ENCODE measurements at regions of chr15 and their contacts with region 1.

Region 1: DNA sequence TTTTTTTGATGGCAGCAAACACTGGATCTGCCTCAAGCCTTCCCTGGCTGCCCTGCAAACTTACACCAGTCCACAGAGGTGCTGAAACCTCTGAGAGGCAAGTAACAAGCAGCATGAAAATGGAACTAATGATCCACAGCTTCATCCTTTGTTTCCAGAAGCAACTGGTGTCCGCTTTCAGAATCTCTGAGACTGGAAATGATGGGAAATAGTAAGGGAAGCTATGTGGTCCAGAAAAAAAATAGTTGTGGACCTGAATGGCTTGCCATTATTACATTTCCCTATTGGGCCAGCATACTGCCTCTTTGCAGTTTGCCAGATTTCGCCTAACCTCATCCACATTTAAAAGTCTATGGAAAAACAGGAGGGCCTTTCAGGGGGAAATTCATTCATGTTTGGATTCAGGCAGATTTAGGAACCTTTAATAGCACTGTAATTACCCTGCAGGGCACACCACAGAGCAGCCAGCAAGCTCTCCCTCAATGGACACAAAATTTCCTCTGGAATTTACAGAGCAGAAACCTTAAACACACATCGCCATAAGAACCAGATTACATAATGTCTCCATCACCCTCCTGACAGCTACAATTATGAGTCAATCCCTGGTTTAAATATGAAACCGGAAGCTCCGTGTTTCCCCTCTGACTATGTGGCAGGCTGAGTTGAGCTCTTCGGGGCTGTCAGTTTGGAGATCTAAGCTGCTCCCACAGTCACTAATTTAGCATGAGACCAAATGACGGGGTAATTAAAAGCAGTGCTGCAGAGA is 134.4 kb downstream of the TMCO5A start:
- DNase-seq: peak; percentile 95
- H3K4me3 ChIP-seq: peak overlapping the region; percentile 12
- H3K27ac ChIP-seq: peak overlapping the region; percentile 57
- H3K4me1 ChIP-seq: peaks cover 24% of the 10 kb centered on the region
- H3K27me3 ChIP-seq: no peaks in the 10 kb centered on the region
- CTCF ChIP-seq: no peak

Region 2: DNA sequence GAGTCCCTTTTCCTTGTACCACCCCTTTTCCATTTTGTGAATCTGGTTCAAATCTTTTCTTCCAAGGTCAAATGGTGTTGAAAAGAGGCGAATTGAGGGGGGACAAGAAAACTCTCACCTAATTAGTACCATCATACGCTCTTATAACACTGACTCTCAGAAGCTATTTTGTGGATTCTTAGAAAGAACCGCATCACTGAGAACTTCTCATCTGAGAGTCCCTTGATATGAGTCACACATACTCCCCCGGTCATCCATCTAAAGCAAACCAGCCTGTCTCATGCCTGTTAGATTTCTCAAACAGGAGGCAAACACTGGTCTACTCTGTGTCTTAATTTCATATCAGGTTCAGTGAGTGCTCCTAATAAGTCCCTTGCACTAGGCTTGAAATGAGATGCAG is 107.3 kb after region 1 on chr15:
- CTCF ChIA-PET with region 1: no interaction called
- POLR2A ChIA-PET with region 1: no interaction called
- intact Hi-C with region 1: no loop called
- DNase-seq: peak; percentile 12
- H3K4me3 ChIP-seq: no peak overlapping the region
- H3K27ac ChIP-seq: no peak overlapping the region
- H3K4me1 ChIP-seq: peaks cover 2% of the 10 kb centered on the region
- H3K27me3 ChIP-seq: no peaks in the 10 kb centered on the region
- CTCF ChIP-seq: no peak

Region 3: GRCh38 chr15:38247336-38247735 is 178.5 kb after region 1 on chr15:
- CTCF ChIA-PET with region 1: interaction called, 3 read pairs
- POLR2A ChIA-PET with region 1: no interaction called
- intact Hi-C with region 1: loop called (anchors 1 kb)
- DNase-seq: peak; percentile 90
- H3K4me3 ChIP-seq: no peak overlapping the region
- H3K27ac ChIP-seq: no peak overlapping the region
- H3K4me1 ChIP-seq: peaks cover 32% of the 10 kb centered on the region
- H3K27me3 ChIP-seq: peaks cover 19% of the 10 kb centered on the region
- CTCF ChIP-seq: no peak

Region 4: DNA sequence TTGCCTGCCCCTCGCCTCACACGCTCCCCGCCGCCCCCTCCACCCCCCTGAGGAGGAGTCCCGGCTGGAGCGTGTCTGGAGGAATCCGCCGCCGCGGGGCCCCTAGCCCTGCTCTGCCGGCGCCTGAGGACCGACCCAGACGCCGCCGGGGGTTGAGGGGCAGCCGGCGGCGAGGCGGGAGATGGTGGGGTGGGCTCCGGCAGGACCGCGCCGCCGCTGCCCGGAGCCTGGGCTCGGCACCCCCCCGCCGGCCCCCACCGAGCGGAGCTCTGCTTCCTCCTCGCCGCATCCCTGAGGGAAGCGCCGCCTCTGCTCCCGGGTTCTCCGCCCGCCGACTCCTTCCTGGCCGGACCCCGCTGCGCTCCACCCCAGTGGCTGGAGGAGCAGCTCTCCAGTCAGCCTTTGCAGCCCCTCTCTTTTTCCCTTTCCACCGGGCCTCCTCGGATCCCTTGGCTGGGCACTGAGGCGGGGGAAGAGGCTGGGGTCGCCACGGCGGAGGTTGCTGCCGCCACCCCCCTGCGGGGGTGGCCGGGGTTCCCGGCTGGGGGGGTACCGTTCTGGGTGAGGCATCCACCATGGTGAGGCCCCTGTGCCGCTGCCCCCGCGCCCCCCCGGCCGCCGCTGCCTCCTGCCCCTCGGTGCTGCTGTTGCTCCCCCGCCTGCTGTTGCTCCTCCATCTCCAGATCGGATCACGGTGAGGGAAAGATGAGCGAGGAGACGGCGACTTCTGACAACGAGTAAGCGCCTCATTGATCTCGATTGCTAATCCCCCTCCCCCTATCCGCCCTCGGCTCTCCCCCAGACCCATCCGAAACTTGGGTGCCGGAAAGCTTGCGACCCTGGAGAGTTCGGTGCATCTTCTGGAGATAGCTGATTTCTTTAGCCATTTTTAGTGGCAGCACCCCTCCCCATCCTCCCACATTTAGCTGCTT is 183.9 kb after region 1 on chr15 and contains the start of gene SPRED1:
- CTCF ChIA-PET with region 1: interaction called, 3 read pairs
- POLR2A ChIA-PET with region 1: no interaction called
- intact Hi-C with region 1: loop called (anchors 1 kb)
- DNase-seq: peak; percentile 81
- H3K4me3 ChIP-seq: peak within 1 kb of the TSS; percentile 91
- H3K27ac ChIP-seq: peak within 1 kb of the TSS; percentile 98
- H3K4me1 ChIP-seq: peaks cover 34% of the 10 kb centered on the region
- H3K27me3 ChIP-seq: peaks cover 6% of the 10 kb centered on the region
- CTCF ChIP-seq: no peak
- total RNA-seq, gene SPRED1: 14.2 and 17.3 TPM in 2 replicates

Measured in A673 (cell line).